H1 (cell line): ENCODE measurements at regions of chr19 and their contacts with region 1.

Region 1: GRCh38 chr19:38929929-38930775 is at the start of gene SARS2:
- DNase-seq: peak; percentile 95 to 96
- H3K4me3 ChIP-seq: peak within 1 kb of the TSS; percentile 62 to 93 (median 86)
- H3K27ac ChIP-seq: peak within 1 kb of the TSS; percentile 97
- H3K4me1 ChIP-seq: peaks cover 0 to 2% (median under 1%) of the 10 kb centered on the region in 4 experiments; a peak in 3 of 7 replicates
- H3K27me3 ChIP-seq: no peaks in the 10 kb centered on the region
- CTCF ChIP-seq: peak; percentile 92 to 98 (median 93)
- EP300 ChIP-seq: no peak
- POLR2A ChIP-seq: peak; percentile 97 to 99
- RAD21 ChIP-seq: peak; percentile 55 to 62
- total RNA-seq, gene SARS2: 59.2 and 68.0 TPM in 2 replicates

Region 2: DNA sequence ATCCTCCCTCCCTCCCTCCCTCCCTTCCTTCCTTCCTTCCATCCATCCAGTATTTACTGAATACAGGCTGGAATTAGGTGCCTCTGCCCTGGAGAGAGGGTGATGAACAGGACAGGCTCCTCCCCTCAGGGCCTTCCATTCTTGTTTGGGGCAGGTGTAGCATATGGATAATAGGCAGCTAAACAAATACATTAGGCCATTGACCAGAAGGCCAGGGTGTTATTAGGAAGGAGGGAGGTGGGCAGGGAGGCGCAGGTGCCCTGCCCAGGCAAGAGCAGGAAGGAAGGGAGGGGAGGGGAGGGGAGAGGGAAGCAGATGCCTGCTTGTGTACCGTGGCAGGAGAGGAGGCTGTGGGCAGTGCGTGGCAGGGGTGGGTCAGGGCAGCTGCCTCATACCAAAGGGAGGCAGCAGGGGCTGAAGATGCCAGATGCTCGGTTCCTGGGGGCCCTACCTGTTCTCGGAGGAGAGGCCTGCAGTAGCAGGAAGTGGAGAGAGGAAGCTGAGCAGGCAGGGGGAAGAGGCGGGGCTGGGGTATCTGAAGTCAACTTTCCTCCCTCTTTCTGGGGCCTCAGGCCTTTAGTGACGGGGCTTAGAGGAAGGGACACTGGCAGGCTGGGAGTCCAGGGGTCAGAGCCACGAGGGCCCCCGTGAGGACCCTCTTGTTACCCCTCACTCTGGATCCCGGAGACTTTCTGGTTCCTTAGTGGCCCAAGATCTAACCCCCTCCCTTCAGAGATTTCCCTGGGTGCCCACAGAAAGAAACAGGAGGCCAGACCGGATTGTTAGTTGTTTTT is 52.2 kb before region 1 on chr19 and contains the start of gene RINL:
- CTCF ChIA-PET with region 1: interaction called, 15 read pairs
- POLR2A ChIA-PET with region 1: interaction called, 4 read pairs
- DNase-seq: no peak
- H3K4me3 ChIP-seq: no peak within 1 kb of the TSS
- H3K27ac ChIP-seq: no peak within 1 kb of the TSS
- H3K4me1 ChIP-seq: peaks cover 0 to 8% (median 3%) of the 10 kb centered on the region in 4 experiments; a peak in 6 of 7 replicates
- H3K27me3 ChIP-seq: no peaks in the 10 kb centered on the region
- CTCF ChIP-seq: no peak
- EP300 ChIP-seq: no peak
- POLR2A ChIP-seq: no peak
- RAD21 ChIP-seq: no peak
- total RNA-seq, gene RINL: 11.9 and 14.2 TPM in 2 replicates

Region 3: GRCh38 chr19:38917516-38918491 is 12.3 kb before region 1 on chr19:
- CTCF ChIA-PET with region 1: interaction called, 24 read pairs
- POLR2A ChIA-PET with region 1: interaction called, 36 read pairs
- DNase-seq: no peak
- H3K4me3 ChIP-seq: no peak overlapping the region
- H3K27ac ChIP-seq: no peak overlapping the region
- H3K4me1 ChIP-seq: no peaks in the 10 kb centered on the region
- H3K27me3 ChIP-seq: no peaks in the 10 kb centered on the region; a peak in 1 of 7 replicates
- CTCF ChIP-seq: peak in 1 of 3 experiments; percentile 11; a peak in 2 of 4 replicates
- EP300 ChIP-seq: no peak
- POLR2A ChIP-seq: no peak
- RAD21 ChIP-seq: no peak

Region 4: DNA sequence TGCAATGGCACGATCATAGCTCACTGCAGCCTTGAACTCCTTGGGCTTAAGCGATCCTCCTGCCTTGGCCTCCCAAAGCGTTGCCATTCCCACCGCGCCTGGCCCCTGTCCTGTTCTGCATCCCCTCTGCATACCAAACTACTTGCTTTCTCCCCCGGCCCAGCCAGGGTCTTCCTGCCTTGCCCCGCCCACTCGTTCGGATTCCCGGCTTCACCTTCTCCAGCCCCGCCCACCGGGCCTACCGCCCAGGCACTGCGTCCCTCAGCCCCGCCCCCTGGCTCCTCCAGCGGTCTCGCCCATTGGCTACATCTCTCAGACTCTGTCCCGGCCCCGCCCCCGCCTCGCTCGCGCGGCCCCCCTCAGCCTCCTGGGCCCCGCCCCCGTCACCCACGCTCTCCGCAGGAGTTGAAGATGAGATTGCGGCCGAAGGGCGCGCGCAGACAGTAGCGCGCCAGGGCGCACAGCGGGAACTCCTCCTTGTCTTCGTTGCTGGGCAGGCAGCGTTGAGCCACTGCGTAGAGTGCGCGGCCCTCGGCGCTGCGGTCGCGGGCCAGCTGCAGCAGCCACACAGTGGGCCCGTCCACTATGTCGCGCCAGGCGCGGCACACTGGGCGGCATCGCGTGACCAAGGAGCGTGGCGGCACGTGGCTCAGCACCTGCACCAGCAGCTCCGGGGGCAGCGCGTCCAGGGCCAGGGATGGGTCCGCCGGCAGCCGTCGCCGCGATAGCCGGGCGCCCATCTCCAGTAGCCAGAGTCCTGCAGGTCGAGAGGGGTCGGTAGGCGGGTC is 19.6 kb after region 1 on chr19:
- CTCF ChIA-PET with region 1: interaction called, 120 read pairs
- POLR2A ChIA-PET with region 1: interaction called, 7 read pairs
- DNase-seq: peak; percentile 87 to 99
- H3K4me3 ChIP-seq: peak overlapping the region; percentile 36 to 61 (median 54)
- H3K27ac ChIP-seq: no peak overlapping the region; the same call in 1 of the 2 replicates
- H3K4me1 ChIP-seq: peaks cover 0 to 5% (median 0%) of the 10 kb centered on the region in 4 experiments; a peak in 3 of 7 replicates
- H3K27me3 ChIP-seq: peaks cover 0 to 3% (median under 1%) of the 10 kb centered on the region in 4 experiments; a peak in 1 of 7 replicates
- CTCF ChIP-seq: no peak
- EP300 ChIP-seq: no peak
- POLR2A ChIP-seq: no peak
- RAD21 ChIP-seq: no peak